Heart left ventricle (tissue), 16 donors: ENCODE measurements at regions of chr9 and their contacts with region 1.

Region 1: GRCh38 chr9:13648676-13649075 is 369.2 kb upstream of the MPDZ start:
- DNase-seq: no peak
- ATAC-seq: no peak
- H3K4me3 ChIP-seq: no peak overlapping the region
- H3K27ac ChIP-seq: no peak overlapping the region
- H3K4me1 ChIP-seq: peaks cover 0 to 23% (median 7%) of the 10 kb centered on the region in 12 donors
- H3K27me3 ChIP-seq: no peaks in the 10 kb centered on the region
- CTCF ChIP-seq: no peak
- POLR2A ChIP-seq: no peak

Region 2: DNA sequence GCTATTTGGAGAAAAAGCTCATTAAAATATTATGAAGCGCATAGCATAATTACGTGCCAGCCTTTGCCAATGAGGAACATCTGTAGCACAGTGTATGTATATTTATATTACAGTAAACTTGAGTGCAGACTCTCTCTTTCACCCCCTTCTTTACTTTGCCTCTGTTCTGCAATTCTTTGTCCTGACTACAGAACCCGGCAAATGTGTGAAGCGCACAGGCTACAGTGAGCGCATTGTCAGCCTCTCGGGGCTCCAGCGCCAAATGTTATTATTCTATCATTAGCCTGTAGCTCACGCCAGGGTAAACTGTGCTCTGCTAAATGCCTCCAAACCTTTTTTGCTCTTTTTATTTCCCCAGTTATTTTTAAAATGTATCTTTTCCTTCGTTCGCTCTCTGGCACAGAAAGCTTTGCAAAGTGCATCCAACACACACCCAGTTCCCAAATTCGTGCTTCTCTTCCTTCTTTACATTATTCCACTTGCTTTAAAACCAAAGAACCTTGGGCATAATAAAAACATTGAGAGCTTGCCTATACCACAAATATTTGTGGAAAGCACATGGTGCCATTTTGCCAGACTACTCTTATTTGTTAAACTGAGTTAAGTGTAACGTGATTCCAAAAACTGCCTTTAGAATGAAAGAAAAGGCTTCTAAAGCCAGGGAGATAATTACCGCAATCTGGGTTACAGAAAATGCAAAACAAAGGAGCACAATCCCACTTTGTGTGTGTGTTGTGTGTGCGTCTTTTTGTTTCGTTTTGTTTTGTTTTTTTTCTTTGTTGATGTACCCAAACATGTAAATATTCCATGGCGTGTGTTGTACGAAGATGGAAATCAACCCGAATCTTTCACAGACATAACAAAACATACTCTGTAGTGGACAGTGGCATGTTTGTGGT is 205.1 kb before region 1 on chr9:
- intact Hi-C with region 1: no loop called
- DNase-seq: peak in 1 of 5 donors; percentile 31
- ATAC-seq: peak in 2 of 4 donors; percentile 21 to 24
- H3K4me3 ChIP-seq: peak overlapping the region in 8 of 12 donors; percentile 2 to 35 (median 14)
- H3K27ac ChIP-seq: peak overlapping the region in 8 of 12 donors; percentile 3 to 72 (median 28)
- H3K4me1 ChIP-seq: peaks cover 1 to 60% (median 36%) of the 10 kb centered on the region in 12 donors
- H3K27me3 ChIP-seq: no peaks in the 10 kb centered on the region
- CTCF ChIP-seq: no peak
- POLR2A ChIP-seq: no peak

Region 3: DNA sequence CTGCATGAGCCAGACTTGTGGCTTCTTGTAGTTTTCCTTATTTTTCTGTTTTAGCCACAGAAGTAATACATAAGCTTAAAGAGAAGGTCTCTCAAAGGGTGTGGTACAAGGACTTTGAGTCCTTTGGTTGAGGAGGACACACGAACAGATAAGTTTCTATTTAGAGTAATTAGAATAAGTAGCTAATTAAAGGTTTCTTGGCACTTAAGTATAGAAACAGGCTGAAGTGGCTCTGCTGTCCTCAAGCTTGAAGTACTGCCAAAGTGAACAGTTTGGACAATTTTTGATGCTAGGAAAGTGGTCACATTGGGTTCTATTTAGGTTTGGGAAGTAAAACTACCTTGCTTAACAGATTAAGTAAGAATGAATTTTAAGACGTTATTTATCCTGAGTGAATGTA is 90.9 kb before region 1 on chr9:
- intact Hi-C with region 1: loop called in 1 of 10 experiments (anchors 10 kb)
- DNase-seq: no peak
- ATAC-seq: peak; percentile 80 to 91 (median 88)
- H3K4me3 ChIP-seq: no peak overlapping the region
- H3K27ac ChIP-seq: peak overlapping the region in 11 of 12 donors; percentile 4 to 69 (median 39)
- H3K4me1 ChIP-seq: peaks cover 0 to 27% (median 0%) of the 10 kb centered on the region in 12 donors
- H3K27me3 ChIP-seq: no peaks in the 10 kb centered on the region
- CTCF ChIP-seq: no peak
- POLR2A ChIP-seq: no peak

Region 4: DNA sequence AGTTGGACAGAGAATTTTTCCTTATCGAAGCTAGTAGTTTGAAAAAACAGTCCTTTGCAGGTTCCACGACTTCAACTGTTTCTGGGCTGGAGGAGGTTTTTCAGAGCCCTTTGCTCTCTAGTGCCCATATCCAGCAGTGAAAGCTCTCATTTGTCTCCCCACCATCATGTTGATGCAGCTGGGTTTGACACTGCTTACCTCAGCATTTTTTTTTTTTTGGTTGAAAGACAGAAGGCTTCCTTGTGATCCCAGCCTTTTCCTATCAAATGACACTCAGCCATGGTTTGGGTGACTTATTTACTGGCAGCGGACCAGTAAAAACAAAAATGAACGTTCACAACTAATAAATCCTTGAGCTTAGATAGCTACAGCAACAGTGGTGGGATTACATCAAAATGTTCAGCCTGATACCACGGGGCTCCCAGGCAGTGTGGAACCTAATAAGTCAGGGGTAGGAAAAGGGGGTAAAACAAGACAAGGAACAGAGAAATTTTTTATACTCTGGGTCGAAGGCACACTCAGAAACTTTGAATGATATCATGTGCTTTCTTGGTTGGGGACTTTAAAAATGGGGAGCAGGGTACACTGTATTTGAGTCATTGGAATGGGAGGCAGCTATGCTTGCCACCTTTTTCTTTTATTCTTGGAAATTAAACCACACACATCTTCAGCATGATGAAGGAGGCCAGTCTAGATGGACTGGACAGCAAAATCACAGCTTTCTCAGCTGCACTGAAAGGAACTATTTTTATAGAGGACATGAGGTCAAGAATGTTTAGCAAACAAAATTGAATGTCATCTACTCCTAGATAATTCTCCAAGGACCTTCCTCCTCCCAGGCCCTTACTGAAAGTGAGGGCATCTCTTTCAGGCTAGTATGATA is 60.3 kb before region 1 on chr9:
- intact Hi-C with region 1: loop called in 2 of 10 experiments (anchors 10 kb)
- DNase-seq: peak in 1 of 5 donors; percentile 29
- ATAC-seq: peak; percentile 52 to 75 (median 64)
- H3K4me3 ChIP-seq: no peak overlapping the region
- H3K27ac ChIP-seq: peak overlapping the region in 11 of 12 donors; percentile 26 to 78 (median 60)
- H3K4me1 ChIP-seq: peaks cover 0 to 57% (median 23%) of the 10 kb centered on the region in 12 donors
- H3K27me3 ChIP-seq: no peaks in the 10 kb centered on the region
- CTCF ChIP-seq: no peak
- POLR2A ChIP-seq: no peak

Region 5: DNA sequence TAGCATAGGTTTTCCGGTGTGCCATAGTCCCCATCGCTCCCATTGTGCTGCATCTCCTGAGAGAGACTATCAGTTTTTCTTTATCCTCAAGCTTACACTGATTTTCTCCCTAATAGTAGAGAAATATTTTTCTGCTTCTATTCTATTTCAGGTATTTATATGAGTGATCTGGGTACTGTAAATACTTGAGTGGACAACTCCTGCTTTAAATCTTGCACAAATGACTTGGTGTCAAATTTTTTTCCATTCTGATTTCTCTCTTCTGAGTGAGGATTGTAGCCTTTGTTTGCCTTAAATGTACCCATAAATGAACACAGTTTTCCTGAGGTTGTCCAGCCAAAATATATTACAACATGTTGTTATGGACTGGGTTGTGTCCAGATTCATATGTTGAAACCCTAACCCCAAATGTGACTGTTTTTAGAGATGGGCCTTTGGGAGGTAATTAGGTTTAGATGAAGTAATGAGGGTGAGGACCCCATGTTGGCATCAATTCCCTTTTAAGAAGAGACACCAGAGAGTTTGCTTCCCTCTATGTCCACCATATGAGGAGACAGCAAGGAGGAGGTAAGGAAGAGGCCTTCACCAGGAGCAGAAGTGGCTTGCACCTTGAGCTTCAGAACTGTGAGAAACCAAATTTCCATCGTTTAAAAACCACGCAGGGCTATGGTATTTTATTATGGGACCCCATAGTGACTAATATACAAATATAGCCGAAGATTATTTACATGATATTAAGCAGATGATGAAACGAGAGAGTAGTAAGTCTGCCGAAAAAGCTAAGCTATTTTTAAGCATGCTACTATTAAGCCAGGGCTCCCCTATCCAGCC is 32.8 kb before region 1 on chr9:
- intact Hi-C with region 1: loop called in 2 of 10 experiments (anchors 5 kb)
- DNase-seq: no peak
- ATAC-seq: no peak
- H3K4me3 ChIP-seq: no peak overlapping the region
- H3K27ac ChIP-seq: no peak overlapping the region
- H3K4me1 ChIP-seq: peaks cover 0 to 10% (median 0%) of the 10 kb centered on the region in 12 donors
- H3K27me3 ChIP-seq: no peaks in the 10 kb centered on the region
- CTCF ChIP-seq: no peak
- POLR2A ChIP-seq: no peak

Region 6: GRCh38 chr9:13688994-13689600 is 40.4 kb after region 1 on chr9:
- intact Hi-C with region 1: no loop called
- DNase-seq: peak in 1 of 5 donors; percentile 32
- ATAC-seq: peak in 1 of 4 donors; percentile 23
- H3K4me3 ChIP-seq: no peak overlapping the region
- H3K27ac ChIP-seq: peak overlapping the region in 6 of 12 donors; percentile 1 to 33 (median 16)
- H3K4me1 ChIP-seq: peaks cover 0 to 30% (median 12%) of the 10 kb centered on the region in 12 donors
- H3K27me3 ChIP-seq: no peaks in the 10 kb centered on the region
- CTCF ChIP-seq: peak; percentile 35 to 64 (median 54)
- POLR2A ChIP-seq: no peak

Region 7: GRCh38 chr9:13863112-13863511 is 214.4 kb after region 1 on chr9:
- intact Hi-C with region 1: no loop called
- DNase-seq: peak; percentile 63 to 80 (median 77)
- ATAC-seq: peak; percentile 85 to 97 (median 95)
- H3K4me3 ChIP-seq: no peak overlapping the region
- H3K27ac ChIP-seq: peak overlapping the region; percentile 12 to 56 (median 38)
- H3K4me1 ChIP-seq: peaks cover 0 to 39% (median 21%) of the 10 kb centered on the region in 12 donors
- H3K27me3 ChIP-seq: no peaks in the 10 kb centered on the region
- CTCF ChIP-seq: no peak
- POLR2A ChIP-seq: no peak

Region 8: GRCh38 chr9:14071484-14071883 is 422.8 kb after region 1 on chr9:
- intact Hi-C with region 1: no loop called
- DNase-seq: no peak
- ATAC-seq: no peak
- H3K4me3 ChIP-seq: no peak overlapping the region
- H3K27ac ChIP-seq: no peak overlapping the region
- H3K4me1 ChIP-seq: peaks cover 0 to 10% (median 0%) of the 10 kb centered on the region in 12 donors
- H3K27me3 ChIP-seq: no peaks in the 10 kb centered on the region
- CTCF ChIP-seq: no peak
- POLR2A ChIP-seq: no peak